CD4-positive, alpha-beta T cell (primary cell): ENCODE measurements at regions of chr12 and their contacts with region 1.

Region 1: GRCh38 chr12:98503592-98504367 is 11.6 kb upstream of the TMPO start:
- DNase-seq: peak; percentile 90 to 97 (median 94)
- ATAC-seq: peak; percentile 85
- H3K4me3 ChIP-seq: peak overlapping the region; percentile 95
- H3K4me3 Mint-ChIP-seq: peak overlapping the region; percentile 99
- H3K27ac ChIP-seq: peak overlapping the region; percentile 88 to 97
- H3K27ac Mint-ChIP-seq: peak overlapping the region; percentile 100
- H3K4me1 ChIP-seq: peaks cover 28% of the 10 kb centered on the region
- H3K4me1 Mint-ChIP-seq: peaks cover 34% of the 10 kb centered on the region
- H3K27me3 ChIP-seq: no peaks in the 10 kb centered on the region
- H3K27me3 Mint-ChIP-seq: peaks cover 18% of the 10 kb centered on the region
- CTCF ChIP-seq: no peak

Region 2: GRCh38 chr12:96906849-96907670 is 1596.7 kb before region 1 on chr12 and contains the start of gene NEDD1:
- CTCF ChIA-PET with region 1: no interaction called
- POLR2A ChIA-PET with region 1: no interaction called
- intact Hi-C with region 1: loop called in 1 of 2 experiments (anchors 10 kb)
- DNase-seq: peak; percentile 66 to 90 (median 76)
- ATAC-seq: peak; percentile 69
- H3K4me3 ChIP-seq: peak within 1 kb of the TSS; percentile 93
- H3K4me3 Mint-ChIP-seq: peak within 1 kb of the TSS; percentile 99
- H3K27ac ChIP-seq: peak within 1 kb of the TSS; percentile 90 to 99
- H3K27ac Mint-ChIP-seq: peak within 1 kb of the TSS; percentile 98
- H3K4me1 ChIP-seq: peaks cover 22% of the 10 kb centered on the region
- H3K4me1 Mint-ChIP-seq: peaks cover 49% of the 10 kb centered on the region
- H3K27me3 ChIP-seq: no peaks in the 10 kb centered on the region
- H3K27me3 Mint-ChIP-seq: no peaks in the 10 kb centered on the region
- CTCF ChIP-seq: no peak
- total RNA-seq, gene NEDD1: 25.3 to 28.8 TPM

Region 3: DNA sequence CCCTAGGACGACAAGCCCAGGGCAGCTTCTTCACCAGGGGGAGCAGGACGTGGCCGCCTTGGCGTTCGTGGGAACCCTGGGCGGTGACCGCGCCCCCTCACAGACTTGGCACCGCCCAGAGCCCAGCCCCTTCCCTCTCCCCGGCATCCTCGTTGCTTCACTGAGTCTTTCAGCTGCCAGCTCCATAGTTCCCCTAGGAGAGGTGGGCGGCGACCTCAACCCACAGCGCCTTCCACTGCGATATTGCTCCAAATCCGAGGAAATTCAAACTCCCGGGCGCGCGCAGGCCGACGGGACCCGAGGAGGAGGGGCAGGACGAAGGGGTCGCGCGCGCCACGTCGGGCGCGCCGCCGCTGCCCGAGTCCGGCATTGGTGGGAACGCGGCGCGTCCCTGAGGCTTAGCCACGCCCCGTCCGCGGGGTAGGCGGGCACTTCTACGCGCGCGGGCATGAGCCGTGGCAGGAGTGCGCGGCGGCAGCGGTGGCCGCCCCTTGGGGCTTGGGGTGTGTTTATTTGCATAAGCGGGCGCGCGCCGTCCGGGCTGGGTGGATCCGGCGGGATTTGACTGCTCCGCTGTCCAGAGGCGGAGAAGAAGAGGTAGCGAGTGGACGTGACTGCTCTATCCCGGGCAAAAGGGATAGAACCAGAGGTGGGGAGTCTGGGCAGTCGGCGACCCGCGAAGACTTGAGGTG is 141.1 kb after region 1 on chr12 and contains the starts of genes APAF1 and IKBIP:
- CTCF ChIA-PET with region 1: no interaction called
- POLR2A ChIA-PET with region 1: interaction called, 3 read pairs
- intact Hi-C with region 1: loop called in 1 of 2 experiments (anchors 5 kb)
- DNase-seq: peak; percentile 91 to 98 (median 97)
- ATAC-seq: peak; percentile 91
- H3K4me3 ChIP-seq: peak within 1 kb of the TSS; percentile 89
- H3K4me3 Mint-ChIP-seq: peak within 1 kb of the TSS; percentile 99
- H3K27ac ChIP-seq: peak within 1 kb of the TSS; percentile 55 to 71
- H3K27ac Mint-ChIP-seq: peak within 1 kb of the TSS; percentile 91
- H3K4me1 ChIP-seq: peaks cover 22% of the 10 kb centered on the region
- H3K4me1 Mint-ChIP-seq: peaks cover 32% of the 10 kb centered on the region
- H3K27me3 ChIP-seq: no peaks in the 10 kb centered on the region
- H3K27me3 Mint-ChIP-seq: no peaks in the 10 kb centered on the region
- CTCF ChIP-seq: no peak
- total RNA-seq, gene APAF1: 13.5 to 14.5 TPM
- total RNA-seq, gene IKBIP: 0.56 to 0.82 TPM

Region 4: GRCh38 chr12:98709022-98709421 is 205.2 kb after region 1 on chr12:
- CTCF ChIA-PET with region 1: no interaction called
- POLR2A ChIA-PET with region 1: no interaction called
- intact Hi-C with region 1: no loop called
- DNase-seq: no peak
- ATAC-seq: no peak
- H3K4me3 ChIP-seq: no peak overlapping the region
- H3K4me3 Mint-ChIP-seq: no peak overlapping the region
- H3K27ac ChIP-seq: no peak overlapping the region
- H3K27ac Mint-ChIP-seq: no peak overlapping the region
- H3K4me1 ChIP-seq: no peaks in the 10 kb centered on the region
- H3K4me1 Mint-ChIP-seq: no peaks in the 10 kb centered on the region
- H3K27me3 ChIP-seq: no peaks in the 10 kb centered on the region
- H3K27me3 Mint-ChIP-seq: no peaks in the 10 kb centered on the region
- CTCF ChIP-seq: no peak